ENCODE measurements at regions of chr1 and their contacts with region 1.

Region 1: DNA sequence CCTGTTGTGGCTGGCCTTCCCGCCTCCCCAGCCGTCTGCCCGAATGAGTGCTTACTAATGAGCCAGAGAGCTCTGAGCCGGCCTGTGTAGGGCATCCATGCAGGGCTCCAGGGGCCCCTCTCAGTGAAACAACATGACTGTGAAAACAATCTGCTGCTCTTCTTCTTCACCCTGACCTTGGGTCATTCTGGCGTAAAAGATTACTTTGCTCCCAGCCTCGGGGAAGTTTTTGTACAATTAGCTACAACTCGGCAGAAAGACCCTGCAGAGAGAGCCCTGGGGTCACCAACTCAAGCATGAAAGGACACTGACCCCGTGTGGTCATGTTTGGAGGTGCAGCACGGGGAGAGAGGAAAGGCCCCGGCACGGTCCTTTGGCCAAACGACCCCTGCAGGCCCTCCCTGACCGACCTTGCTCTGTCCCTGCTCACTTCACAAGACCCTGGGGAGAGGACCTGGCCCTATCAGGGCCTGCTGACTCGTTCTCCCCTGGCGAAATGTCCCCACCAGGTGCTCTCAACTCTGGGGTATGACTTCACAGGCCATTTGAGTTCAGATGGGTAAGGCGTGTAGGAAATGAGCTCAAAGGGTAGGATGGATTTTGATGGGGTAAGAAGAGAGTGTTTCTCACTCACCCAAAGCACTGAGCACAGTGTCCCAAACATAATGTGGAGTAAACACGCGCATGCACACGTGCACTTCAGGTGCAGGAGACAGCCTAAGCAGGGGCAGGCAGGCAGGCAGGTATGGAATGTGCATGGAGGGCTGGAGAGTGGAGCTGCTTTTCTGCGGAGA is 22.9 kb upstream of the FAM20B start:
- DNase-seq: peak; percentile 52
- ATAC-seq: peak; percentile 97
- H3K4me3 ChIP-seq: no peak overlapping the region
- H3K27ac ChIP-seq: no peak overlapping the region
- H3K4me1 ChIP-seq: no peaks in the 10 kb centered on the region; the same call in 1 of the 2 replicates
- H3K27me3 ChIP-seq: no peaks in the 10 kb centered on the region
- CTCF ChIP-seq: peak; percentile 93
- POLR2A ChIP-seq: no peak; the same call in 1 of the 2 replicates
- RAD21 ChIP-seq: peak; percentile 95

Region 2: GRCh38 chr1:178532392-178532791 is 470.4 kb before region 1 on chr1:
- CTCF ChIA-PET with region 1: interaction called, 16 read pairs
- POLR2A ChIA-PET with region 1: no interaction called
- dilution Hi-C with region 1: no loop called
- in situ Hi-C with region 1: loop called (anchors 5 kb)
- intact Hi-C with region 1: loop called (anchors 1 kb)
- DNase-seq: peak; percentile 78
- ATAC-seq: peak; percentile 53
- H3K4me3 ChIP-seq: no peak overlapping the region
- H3K27ac ChIP-seq: no peak overlapping the region
- H3K4me1 ChIP-seq: peaks cover 19% of the 10 kb centered on the region
- H3K27me3 ChIP-seq: no peaks in the 10 kb centered on the region
- CTCF ChIP-seq: peak; percentile 92
- POLR2A ChIP-seq: no peak
- RAD21 ChIP-seq: peak; percentile 93

Region 3: DNA sequence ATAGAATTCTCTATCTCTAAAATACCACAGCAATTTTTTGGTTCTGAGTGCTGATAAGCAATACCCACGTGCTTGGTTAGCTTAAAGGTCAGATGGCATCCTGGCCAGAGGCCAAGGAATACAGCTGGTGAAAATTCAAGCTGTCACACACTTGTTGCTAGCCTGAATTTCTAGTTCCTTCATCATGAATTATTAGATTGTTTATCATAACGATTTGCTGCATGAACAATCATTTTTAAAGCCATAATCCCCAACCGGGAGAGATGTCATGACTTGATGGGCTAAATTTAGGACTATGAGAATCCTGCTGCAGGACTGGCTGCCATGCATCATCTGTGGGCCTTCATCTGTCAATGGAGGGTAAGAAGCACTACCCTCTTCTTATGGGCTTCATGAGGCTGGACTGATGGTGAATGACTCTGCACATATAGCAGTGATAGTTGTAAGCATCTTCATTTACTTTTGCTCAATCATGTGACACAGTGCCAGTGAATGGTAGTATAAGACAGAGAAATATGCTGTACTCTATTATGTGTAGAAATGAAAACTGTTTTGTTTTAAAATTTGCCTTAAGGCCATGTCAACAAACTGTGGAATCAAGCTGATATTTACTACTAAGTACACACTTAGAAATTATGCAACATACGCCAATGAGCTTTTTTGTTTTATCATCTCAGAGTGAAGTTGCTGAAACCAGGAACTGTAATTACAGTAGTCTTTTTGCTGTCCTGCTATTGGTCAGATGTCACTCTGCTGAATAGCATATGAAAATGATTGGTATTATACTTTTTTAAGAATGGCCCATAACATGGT is 358.2 kb before region 1 on chr1:
- CTCF ChIA-PET with region 1: interaction called, 5 read pairs
- POLR2A ChIA-PET with region 1: no interaction called
- dilution Hi-C with region 1: no loop called
- in situ Hi-C with region 1: no loop called
- intact Hi-C with region 1: loop called (anchors 10 kb)
- DNase-seq: peak; percentile 59
- ATAC-seq: 0 out of 2 replicates have a peak, but pooled peaks have one; percentile 16
- H3K4me3 ChIP-seq: no peak overlapping the region
- H3K27ac ChIP-seq: peak overlapping the region; percentile 53; the same call in 1 of the 2 replicates
- H3K4me1 ChIP-seq: peaks cover 20% of the 10 kb centered on the region
- H3K27me3 ChIP-seq: no peaks in the 10 kb centered on the region
- CTCF ChIP-seq: no peak
- POLR2A ChIP-seq: no peak
- RAD21 ChIP-seq: no peak

Region 4: GRCh38 chr1:178725603-178726517 is 276.9 kb before region 1 on chr1:
- CTCF ChIA-PET with region 1: no interaction called
- POLR2A ChIA-PET with region 1: interaction called, 3 read pairs
- dilution Hi-C with region 1: no loop called
- in situ Hi-C with region 1: no loop called
- intact Hi-C with region 1: loop called (anchors 5 kb)
- DNase-seq: peak; percentile 84
- ATAC-seq: peak; percentile 61
- H3K4me3 ChIP-seq: peak overlapping the region; percentile 91
- H3K27ac ChIP-seq: peak overlapping the region; percentile 76
- H3K4me1 ChIP-seq: no peaks in the 10 kb centered on the region; the same call in 1 of the 2 replicates
- H3K27me3 ChIP-seq: no peaks in the 10 kb centered on the region
- CTCF ChIP-seq: no peak
- POLR2A ChIP-seq: no peak
- RAD21 ChIP-seq: no peak

Region 5: GRCh38 chr1:178774263-178774662 is 228.5 kb before region 1 on chr1:
- CTCF ChIA-PET with region 1: interaction called, 7 read pairs
- POLR2A ChIA-PET with region 1: no interaction called
- dilution Hi-C with region 1: no loop called
- in situ Hi-C with region 1: loop called (anchors 10 kb)
- intact Hi-C with region 1: loop called (anchors 2 kb)
- DNase-seq: peak; percentile 28
- ATAC-seq: no peak
- H3K4me3 ChIP-seq: no peak overlapping the region
- H3K27ac ChIP-seq: no peak overlapping the region
- H3K4me1 ChIP-seq: peaks cover 2% of the 10 kb centered on the region; the same call in 1 of the 2 replicates
- H3K27me3 ChIP-seq: no peaks in the 10 kb centered on the region
- CTCF ChIP-seq: peak; percentile 38; the same call in 1 of the 2 replicates
- POLR2A ChIP-seq: no peak
- RAD21 ChIP-seq: peak; percentile 43

Region 6: DNA sequence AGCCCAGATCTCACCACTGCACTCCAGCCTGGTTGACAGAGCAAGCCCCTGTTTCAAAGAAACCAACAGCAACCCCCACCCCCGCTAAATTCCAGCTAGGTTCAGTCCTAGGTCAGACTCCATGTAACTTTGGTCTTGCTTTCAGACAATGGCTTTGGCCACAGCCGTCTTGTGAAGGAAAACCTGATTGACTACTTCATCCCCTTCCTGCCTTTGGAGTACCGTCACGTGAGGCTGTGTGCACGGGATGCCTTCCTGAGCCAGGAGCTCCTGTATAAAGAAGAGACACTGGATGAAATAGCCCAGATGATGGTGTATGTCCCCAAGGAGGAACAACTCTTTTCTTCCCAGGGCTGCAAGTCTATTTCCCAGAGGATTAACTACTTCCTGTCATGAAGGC is 92.1 kb after region 1 on chr1:
- CTCF ChIA-PET with region 1: no interaction called
- POLR2A ChIA-PET with region 1: no interaction called
- dilution Hi-C with region 1: no loop called
- in situ Hi-C with region 1: no loop called
- intact Hi-C with region 1: no loop called
- DNase-seq: no peak
- ATAC-seq: no peak
- H3K4me3 ChIP-seq: no peak overlapping the region
- H3K27ac ChIP-seq: no peak overlapping the region
- H3K4me1 ChIP-seq: peaks cover 10% of the 10 kb centered on the region
- H3K27me3 ChIP-seq: no peaks in the 10 kb centered on the region
- CTCF ChIP-seq: no peak
- POLR2A ChIP-seq: no peak
- RAD21 ChIP-seq: no peak

Measured in IMR-90 (cell line).